Activated CD4-positive, alpha-beta T cell treated with anti-CD3 and anti-CD28 coated beads, Interleukin-2, amount 10 ng/mL, durations not matched to agents 24 days and 14 days (primary cell): ENCODE measurements at regions of chr22 and their contacts with region 1.

Region 1: GRCh38 chr22:21938071-21938822 is 14.4 kb downstream of the PPM1F start:
- DNase-seq: peak; percentile 97
- H3K4me3 Mint-ChIP-seq: peak overlapping the region; percentile 82
- H3K27ac Mint-ChIP-seq: peak overlapping the region; percentile 81
- H3K4me1 Mint-ChIP-seq: peaks cover 46% of the 10 kb centered on the region
- H3K27me3 Mint-ChIP-seq: no peaks in the 10 kb centered on the region

Region 2: DNA sequence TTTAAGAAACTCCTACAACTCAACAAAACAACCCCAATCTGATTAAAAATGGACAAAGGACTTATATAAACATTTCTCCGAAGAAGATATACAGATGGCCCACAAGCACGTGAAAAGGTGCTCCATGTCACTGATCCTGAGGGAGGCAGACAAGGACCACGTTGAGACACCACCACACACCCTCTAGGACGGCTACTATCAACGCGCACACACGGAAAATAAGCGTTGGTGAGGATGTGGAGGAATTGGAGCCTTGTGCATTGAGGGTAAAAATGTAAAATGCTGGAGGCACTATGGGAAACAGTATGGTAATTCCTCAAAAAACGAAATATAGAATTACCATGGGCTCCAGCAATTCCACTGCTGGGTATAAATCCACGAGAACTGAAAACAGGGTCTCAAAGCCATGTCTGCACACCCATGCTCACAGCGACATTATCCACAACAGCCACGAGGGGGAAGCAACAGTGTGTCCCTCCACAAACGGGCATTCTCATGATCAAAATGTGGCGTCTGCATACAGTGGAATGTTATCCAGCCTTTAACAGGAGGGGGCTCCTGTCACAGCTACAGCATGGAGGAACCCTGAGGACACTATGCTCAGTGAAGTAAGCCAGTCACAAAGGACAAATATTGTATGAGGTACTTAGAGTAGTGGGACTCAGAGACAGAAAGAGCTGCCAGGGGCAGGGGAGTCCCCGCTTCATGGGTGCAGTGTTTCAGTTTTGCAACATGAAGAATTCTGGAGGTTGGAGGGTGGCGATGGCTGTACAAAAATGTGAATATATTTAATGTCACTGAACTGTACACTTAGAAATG is 225.1 kb before region 1 on chr22:
- intact Hi-C with region 1: loop called (anchors 1 kb)
- DNase-seq: peak; percentile 85
- H3K4me3 Mint-ChIP-seq: no peak overlapping the region
- H3K27ac Mint-ChIP-seq: no peak overlapping the region
- H3K4me1 Mint-ChIP-seq: peaks cover 4% of the 10 kb centered on the region
- H3K27me3 Mint-ChIP-seq: peaks cover 4% of the 10 kb centered on the region

Region 3: DNA sequence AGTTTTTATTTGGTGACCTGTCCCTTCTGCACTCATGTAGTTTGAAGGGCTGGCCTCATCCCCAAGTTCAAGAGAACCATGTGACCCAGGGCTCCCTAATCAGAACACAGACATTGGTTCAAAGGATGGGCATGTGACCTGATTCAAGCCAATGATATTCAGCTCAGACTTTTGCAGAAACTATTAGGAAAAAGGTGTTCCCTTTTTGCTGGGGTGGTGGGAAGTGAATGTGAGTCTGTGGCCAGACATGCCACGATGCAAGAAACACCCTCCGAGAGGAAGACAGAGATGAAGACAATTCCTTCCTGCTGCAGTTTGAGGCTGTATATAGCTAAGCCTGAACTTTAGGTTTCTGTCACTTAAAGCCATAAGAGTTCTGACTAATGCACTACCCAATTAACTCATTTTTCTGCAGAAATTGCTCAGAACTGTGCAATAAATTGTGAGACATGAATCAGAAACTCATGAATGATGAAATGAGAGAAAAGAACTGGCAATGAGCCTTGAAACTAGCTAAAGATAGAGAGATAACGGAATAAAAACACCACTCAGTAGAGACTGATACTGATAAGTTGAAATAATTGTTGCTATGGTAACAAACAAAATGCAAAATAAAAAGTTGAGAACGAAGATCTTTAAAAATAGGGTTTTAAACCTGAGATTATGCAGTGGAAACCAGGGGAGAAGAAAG is 61.6 kb before region 1 on chr22:
- intact Hi-C with region 1: no loop called
- DNase-seq: peak; percentile 64
- H3K4me3 Mint-ChIP-seq: no peak overlapping the region
- H3K27ac Mint-ChIP-seq: peak overlapping the region; percentile 90
- H3K4me1 Mint-ChIP-seq: peaks cover 11% of the 10 kb centered on the region
- H3K27me3 Mint-ChIP-seq: peaks cover 8% of the 10 kb centered on the region

Region 4: GRCh38 chr22:21972293-21972779 is 34.1 kb after region 1 on chr22:
- intact Hi-C with region 1: no loop called
- DNase-seq: peak; percentile 86
- H3K4me3 Mint-ChIP-seq: no peak overlapping the region
- H3K27ac Mint-ChIP-seq: no peak overlapping the region
- H3K4me1 Mint-ChIP-seq: no peaks in the 10 kb centered on the region
- H3K27me3 Mint-ChIP-seq: no peaks in the 10 kb centered on the region

Region 5: DNA sequence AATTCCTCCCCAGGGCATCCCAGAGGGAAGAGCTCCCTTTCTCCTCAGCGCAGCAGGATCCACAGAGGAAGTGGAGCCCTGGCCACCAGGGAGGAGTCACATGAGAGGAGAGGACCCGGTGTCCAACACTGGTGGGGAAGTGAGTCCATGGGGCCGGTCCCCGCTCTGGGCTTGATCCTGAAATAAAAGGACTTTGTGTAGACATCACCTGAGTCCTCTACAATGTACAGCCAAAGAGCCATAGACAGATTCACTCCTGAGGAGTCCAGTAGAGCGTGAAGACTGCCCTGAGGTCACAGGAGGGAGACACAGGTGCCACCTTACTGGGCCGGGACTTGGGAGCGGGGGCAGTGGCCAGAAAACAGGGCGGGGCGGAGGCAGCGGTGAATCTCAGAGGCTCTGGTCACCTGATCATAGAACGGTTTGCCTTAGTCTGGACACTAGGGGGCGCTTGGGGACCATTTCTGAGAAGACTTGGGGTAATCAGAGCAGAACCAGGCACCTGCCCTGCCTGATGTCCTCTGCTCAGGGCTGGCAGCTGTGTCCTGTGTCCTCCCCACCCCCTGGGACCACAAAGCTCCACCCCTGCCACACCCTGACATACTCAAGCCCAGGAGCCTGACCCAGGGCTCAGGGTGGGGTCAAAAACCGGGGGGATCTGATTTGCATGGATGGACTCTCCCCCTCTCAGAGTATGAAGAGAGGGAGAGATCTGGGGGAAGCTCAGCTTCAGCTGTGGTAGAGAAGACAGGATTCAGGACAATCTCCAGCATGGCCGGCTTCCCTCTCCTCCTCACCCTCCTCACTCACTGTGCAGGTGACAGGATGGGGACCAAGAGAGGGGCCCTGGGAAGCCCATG is 419.0 kb after region 1 on chr22:
- intact Hi-C with region 1: no loop called
- DNase-seq: peak; percentile 94
- H3K4me3 Mint-ChIP-seq: no peak overlapping the region
- H3K27ac Mint-ChIP-seq: no peak overlapping the region
- H3K4me1 Mint-ChIP-seq: peaks cover 7% of the 10 kb centered on the region
- H3K27me3 Mint-ChIP-seq: peaks cover 25% of the 10 kb centered on the region

Region 6: DNA sequence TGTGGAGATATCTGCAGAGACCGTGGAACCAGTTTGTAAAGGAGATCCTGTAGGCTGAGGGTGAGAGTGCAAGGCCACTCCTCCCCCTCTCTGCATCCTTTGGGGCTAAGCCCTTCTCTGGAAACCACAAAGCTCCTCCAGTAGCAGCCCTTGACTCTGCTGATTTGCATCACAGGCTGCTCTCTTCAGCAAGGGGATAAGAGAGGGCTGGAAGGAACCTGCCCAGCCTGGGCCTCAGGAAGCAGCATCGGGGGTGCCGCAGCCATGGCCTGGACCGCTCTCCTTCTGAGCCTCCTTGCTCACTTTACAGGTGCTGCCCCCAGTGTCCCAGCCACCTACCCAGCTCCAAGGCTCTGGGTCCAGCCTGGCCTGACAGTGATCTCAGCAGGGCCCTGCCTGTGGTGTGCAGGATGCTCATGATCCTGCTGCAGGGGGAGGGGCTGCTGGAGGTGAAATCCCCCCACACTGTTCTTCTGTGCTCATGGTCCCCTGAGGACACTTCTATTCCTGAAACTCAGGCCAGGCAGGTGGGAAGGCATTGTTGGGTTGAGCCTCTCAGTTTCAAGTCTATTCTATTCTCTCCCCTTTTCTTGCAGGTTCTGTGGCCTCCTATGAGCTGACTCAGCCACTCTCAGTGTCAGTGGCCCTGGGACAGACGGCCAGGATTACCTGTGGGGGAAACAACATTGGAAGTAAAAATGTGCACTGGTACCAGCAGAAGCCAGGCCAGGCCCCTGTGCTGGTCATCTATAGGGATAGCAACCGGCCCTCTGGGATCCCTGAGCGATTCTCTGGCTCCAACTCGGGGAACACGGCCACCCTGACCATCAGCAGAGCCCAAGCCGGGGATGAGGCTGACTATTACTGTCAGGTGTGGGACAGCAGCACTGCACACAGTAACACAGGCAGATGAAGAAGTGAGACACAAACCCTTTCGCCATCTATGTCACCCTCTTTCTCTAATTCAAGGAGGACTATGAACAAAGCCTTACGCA is 880.9 kb after region 1 on chr22:
- intact Hi-C with region 1: no loop called
- DNase-seq: peak; percentile 89
- H3K4me3 Mint-ChIP-seq: peak overlapping the region; percentile 77
- H3K27ac Mint-ChIP-seq: peak overlapping the region; percentile 86
- H3K4me1 Mint-ChIP-seq: peaks cover 85% of the 10 kb centered on the region
- H3K27me3 Mint-ChIP-seq: no peaks in the 10 kb centered on the region